HepG2 (cell line): ENCODE measurements at regions of chr2 and their contacts with region 1.

Region 1: GRCh38 chr2:25228848-25229278 is 60.5 kb upstream of the POMC start:
- DNase-seq: peak; percentile 78
- ATAC-seq: peak; percentile 91
- H3K4me3 ChIP-seq: no peak overlapping the region
- H3K27ac ChIP-seq: no peak overlapping the region
- H3K4me1 ChIP-seq: peaks cover 7% of the 10 kb centered on the region; the same call in 1 of the 2 replicates
- H3K27me3 ChIP-seq: 0 out of 5 replicates have a peak, but pooled peaks cover 0 to 1% of the 10 kb centered on the region in 2 experiments
- CTCF ChIP-seq: peak; percentile 81
- EP300 ChIP-seq: no peak
- POLR2A ChIP-seq: no peak
- RAD21 ChIP-seq: peak; percentile 56

Region 2: GRCh38 chr2:25165992-25166875 is 62.6 kb before region 1 on chr2:
- CTCF ChIA-PET with region 1: no interaction called
- POLR2A ChIA-PET with region 1: no interaction called
- in situ Hi-C with region 1: no loop called
- intact Hi-C with region 1: loop called (anchors 1 kb)
- DNase-seq: peak; percentile 39
- ATAC-seq: peak; percentile 87
- H3K4me3 ChIP-seq: no peak overlapping the region
- H3K27ac ChIP-seq: no peak overlapping the region
- H3K4me1 ChIP-seq: peaks cover 8% of the 10 kb centered on the region; the same call in 1 of the 2 replicates
- H3K27me3 ChIP-seq: peaks cover 10 to 64% of the 10 kb centered on the region in 2 experiments
- CTCF ChIP-seq: peak; percentile 87
- EP300 ChIP-seq: no peak
- POLR2A ChIP-seq: no peak
- RAD21 ChIP-seq: peak; percentile 72

Region 3: DNA sequence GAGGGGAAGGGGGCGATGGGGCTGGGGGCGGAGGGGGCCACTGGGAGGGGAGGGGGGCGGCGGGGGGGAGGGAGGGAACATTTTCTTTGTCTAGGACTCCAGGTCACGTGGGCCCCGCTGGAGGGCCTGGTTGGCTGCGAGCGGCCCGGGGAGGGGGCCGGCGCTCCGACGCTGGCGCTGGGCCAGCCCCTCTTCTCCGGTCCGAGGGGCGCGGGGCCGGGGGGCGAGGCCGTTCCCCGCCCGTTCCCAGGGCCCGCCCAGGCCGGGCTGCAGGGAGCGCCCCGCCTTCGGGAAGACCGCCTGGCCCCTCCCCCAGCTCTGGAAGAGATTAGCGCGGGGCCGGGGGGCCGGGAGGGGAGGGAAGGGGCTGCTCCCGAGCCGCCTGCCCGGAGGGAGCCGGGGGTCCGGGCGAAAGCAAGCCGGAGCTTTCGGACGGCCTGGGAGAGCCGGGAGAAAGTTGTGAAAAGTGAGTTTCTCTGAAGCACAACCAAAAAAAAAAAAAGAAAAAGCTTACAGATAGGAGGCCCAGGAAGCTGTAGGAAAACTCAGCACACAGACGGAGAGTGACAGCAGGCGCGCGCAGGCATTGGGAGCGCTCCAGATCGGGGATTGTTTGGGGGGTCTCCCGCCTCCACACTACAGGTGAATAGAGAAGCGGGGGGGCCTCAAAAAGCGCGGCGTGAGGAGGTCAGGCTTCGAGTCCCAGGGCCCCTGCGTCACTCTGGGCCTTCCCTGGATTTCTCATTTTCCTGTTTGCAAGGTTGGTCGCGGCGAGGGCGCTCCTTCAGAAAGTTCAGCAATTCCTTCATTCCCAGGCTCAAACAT is 23.6 kb after region 1 on chr2:
- CTCF ChIA-PET with region 1: no interaction called
- POLR2A ChIA-PET with region 1: interaction called, 17 read pairs
- in situ Hi-C with region 1: no loop called
- intact Hi-C with region 1: loop called (anchors 1 kb)
- DNase-seq: peak; percentile 82
- ATAC-seq: peak; percentile 73
- H3K4me3 ChIP-seq: peak overlapping the region; percentile 67 to 87 (median 80); a peak in 5 of 6 replicates
- H3K27ac ChIP-seq: peak overlapping the region; percentile 99
- H3K4me1 ChIP-seq: peaks cover 53% of the 10 kb centered on the region
- H3K27me3 ChIP-seq: no peaks in the 10 kb centered on the region
- CTCF ChIP-seq: no peak
- EP300 ChIP-seq: 0 out of 4 replicates have a peak, but pooled peaks of 1 of the 2 experiments have one; percentile 39
- POLR2A ChIP-seq: no peak; a peak in 1 of 4 replicates
- RAD21 ChIP-seq: peak; percentile 15; the same call in 1 of the 2 replicates

Region 4: DNA sequence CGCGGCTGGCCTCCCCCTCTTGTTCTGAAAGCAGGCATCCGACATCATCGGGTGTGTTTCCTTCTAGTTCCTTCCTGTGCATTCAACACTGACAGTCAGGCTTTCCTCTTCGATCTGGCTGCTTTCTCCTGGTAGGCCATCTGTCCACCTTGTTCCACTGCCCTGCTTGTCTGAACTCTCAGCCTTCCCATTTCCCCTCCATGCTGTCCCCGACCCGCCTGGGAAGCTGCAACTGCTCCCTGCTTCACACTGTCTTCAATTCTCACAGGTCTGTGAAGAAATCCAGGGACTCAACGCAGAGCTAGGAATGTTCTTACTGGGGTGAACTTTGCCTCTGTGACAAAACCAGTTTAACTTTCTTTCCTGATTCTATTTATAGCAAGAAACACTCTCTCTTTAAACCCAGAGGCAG is 710.4 kb after region 1 on chr2:
- CTCF ChIA-PET with region 1: no interaction called
- POLR2A ChIA-PET with region 1: no interaction called
- in situ Hi-C with region 1: no loop called
- intact Hi-C with region 1: no loop called
- DNase-seq: no peak
- ATAC-seq: peak; percentile 58
- H3K4me3 ChIP-seq: no peak overlapping the region
- H3K27ac ChIP-seq: no peak overlapping the region
- H3K4me1 ChIP-seq: peaks cover 35% of the 10 kb centered on the region
- H3K27me3 ChIP-seq: no peaks in the 10 kb centered on the region
- CTCF ChIP-seq: no peak
- EP300 ChIP-seq: no peak
- POLR2A ChIP-seq: no peak
- RAD21 ChIP-seq: no peak